CD8-positive, alpha-beta T cell (primary cell): ENCODE measurements at regions of chr4 and their contacts with region 1.

Region 1: GRCh38 chr4:142372530-142373260 is 473.4 kb downstream of the INPP4B start:
- DNase-seq: peak in 1 of 9 experiments; percentile 42
- ATAC-seq: peak; percentile 16
- H3K4me3 ChIP-seq: no peak overlapping the region
- H3K4me3 Mint-ChIP-seq: no peak overlapping the region
- H3K27ac ChIP-seq: no peak overlapping the region
- H3K27ac Mint-ChIP-seq: peak overlapping the region; percentile 29
- H3K4me1 ChIP-seq: peaks cover 38% of the 10 kb centered on the region
- H3K4me1 Mint-ChIP-seq: peaks cover 72% of the 10 kb centered on the region
- H3K27me3 ChIP-seq: no peaks in the 10 kb centered on the region
- H3K27me3 Mint-ChIP-seq: no peaks in the 10 kb centered on the region
- CTCF ChIP-seq: no peak

Region 2: GRCh38 chr4:142358656-142359055 is 14.0 kb before region 1 on chr4:
- CTCF ChIA-PET with region 1: interaction called, 12 read pairs
- POLR2A ChIA-PET with region 1: interaction called, 4 read pairs
- intact Hi-C with region 1: loop called in 1 of 2 experiments (anchors 1 kb)
- DNase-seq: no peak
- ATAC-seq: no peak
- H3K4me3 ChIP-seq: no peak overlapping the region
- H3K4me3 Mint-ChIP-seq: no peak overlapping the region
- H3K27ac ChIP-seq: no peak overlapping the region
- H3K27ac Mint-ChIP-seq: peak overlapping the region; percentile 79
- H3K4me1 ChIP-seq: peaks cover 48% of the 10 kb centered on the region
- H3K4me1 Mint-ChIP-seq: peaks cover 78% of the 10 kb centered on the region
- H3K27me3 ChIP-seq: no peaks in the 10 kb centered on the region
- H3K27me3 Mint-ChIP-seq: no peaks in the 10 kb centered on the region
- CTCF ChIP-seq: no peak